ENCODE measurements at regions of chr16 and their contacts with region 1.

Region 1: DNA sequence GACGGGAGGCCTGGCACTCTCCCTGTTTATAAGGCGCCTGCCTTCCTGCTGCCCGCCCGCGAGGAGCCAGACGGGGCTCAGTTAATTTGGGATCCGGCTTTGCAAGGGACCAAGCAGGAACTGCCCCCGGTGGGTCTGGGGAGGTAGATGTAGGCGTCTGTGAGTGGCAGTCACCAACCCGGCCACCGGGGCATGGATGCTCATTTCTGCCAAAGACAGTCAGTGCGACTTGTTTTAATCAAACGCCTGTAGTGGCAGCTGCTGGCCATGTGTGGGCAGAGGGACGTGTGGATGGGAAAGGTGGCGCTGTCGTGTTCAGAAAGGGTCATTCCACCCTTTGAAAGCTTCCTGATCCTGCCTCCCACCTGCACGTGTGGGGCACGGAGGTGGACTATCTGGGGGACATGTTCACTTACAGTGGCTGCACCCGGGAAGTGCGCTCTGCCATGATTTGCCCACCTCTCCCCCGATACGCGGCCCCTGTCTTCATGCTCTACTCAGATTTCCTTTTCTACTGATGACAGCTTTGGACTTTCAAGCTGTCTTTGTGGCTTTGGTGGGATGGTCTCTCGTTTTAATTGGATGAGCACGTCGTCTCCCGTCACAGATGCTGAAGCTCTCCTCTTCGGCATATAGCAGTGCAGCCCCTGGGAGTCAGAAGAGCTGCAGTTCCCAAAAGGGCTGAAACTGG is 60.3 kb upstream of the CIBAR2 start:
- DNase-seq: peak in 3 of 5 donors; percentile 59 to 69 (median 67)
- ATAC-seq: peak; percentile 23 to 58 (median 44)
- H3K4me3 ChIP-seq: peak overlapping the region in 11 of 12 donors; percentile 12 to 47 (median 35)
- H3K27ac ChIP-seq: peak overlapping the region in 7 of 12 donors; percentile 1 to 49 (median 27)
- H3K4me1 ChIP-seq: peaks cover 0 to 87% (median 63%) of the 10 kb centered on the region in 12 donors
- H3K27me3 ChIP-seq: peaks cover 0 to 44% (median 0%) of the 10 kb centered on the region in 9 donors
- CTCF ChIP-seq: peak in 11 of 12 donors; percentile 26 to 62 (median 44)
- POLR2A ChIP-seq: no peak

Region 2: GRCh38 chr16:85126705-85127419 is 45.7 kb before region 1 on chr16:
- intact Hi-C with region 1: loop called in 3 of 10 experiments (anchors 5 kb)
- DNase-seq: no peak
- ATAC-seq: peak in 3 of 4 donors; percentile 17 to 27 (median 23)
- H3K4me3 ChIP-seq: no peak overlapping the region
- H3K27ac ChIP-seq: peak overlapping the region in 6 of 12 donors; percentile 18 to 79 (median 60)
- H3K4me1 ChIP-seq: peaks cover 0 to 62% (median 42%) of the 10 kb centered on the region in 12 donors
- H3K27me3 ChIP-seq: no peaks in the 10 kb centered on the region
- CTCF ChIP-seq: no peak
- POLR2A ChIP-seq: no peak

Region 3: GRCh38 chr16:85220125-85220839 is 47.7 kb after region 1 on chr16:
- intact Hi-C with region 1: loop called in 4 of 10 experiments (anchors 5 kb)
- DNase-seq: peak; percentile 77 to 88 (median 86)
- ATAC-seq: peak; percentile 63 to 89 (median 88)
- H3K4me3 ChIP-seq: peak overlapping the region in 10 of 12 donors; percentile 20 to 51 (median 38)
- H3K27ac ChIP-seq: peak overlapping the region in 11 of 12 donors; percentile 54 to 82 (median 70)
- H3K4me1 ChIP-seq: peaks cover 6 to 20% (median 16%) of the 10 kb centered on the region in 12 donors
- H3K27me3 ChIP-seq: no peaks in the 10 kb centered on the region
- CTCF ChIP-seq: peak in 2 of 12 donors; percentile 23 to 41
- POLR2A ChIP-seq: no peak

Region 4: GRCh38 chr16:85234310-85235204 is 62.0 kb after region 1 on chr16:
- intact Hi-C with region 1: loop called in 3 of 10 experiments (anchors 5 to 10 kb)
- DNase-seq: peak; percentile 70 to 83 (median 76)
- ATAC-seq: peak; percentile 37 to 77 (median 66)
- H3K4me3 ChIP-seq: peak overlapping the region in 10 of 12 donors; percentile 15 to 58 (median 48)
- H3K27ac ChIP-seq: peak overlapping the region in 9 of 12 donors; percentile 12 to 79 (median 47)
- H3K4me1 ChIP-seq: peaks cover 2 to 63% (median 36%) of the 10 kb centered on the region in 12 donors
- H3K27me3 ChIP-seq: peaks cover 0 to 16% (median 0%) of the 10 kb centered on the region in 9 donors
- CTCF ChIP-seq: no peak
- POLR2A ChIP-seq: no peak

Measured in heart left ventricle (tissue), 16 donors.